ENCODE measurements at regions of chr12 and their contacts with region 1.

Region 1: GRCh38 chr12:108884116-108885012 is 4.5 kb downstream of the DAO start:
- DNase-seq: peak; percentile 31 to 70 (median 58)
- ATAC-seq: peak in 3 of 4 donors; percentile 29 to 76 (median 63)
- H3K4me3 ChIP-seq: no peak overlapping the region
- H3K27ac ChIP-seq: no peak overlapping the region
- H3K4me1 ChIP-seq: peaks cover 0 to 13% (median 0%) of the 10 kb centered on the region in 12 donors
- H3K27me3 ChIP-seq: no peaks in the 10 kb centered on the region
- CTCF ChIP-seq: peak; percentile 28 to 64 (median 50)
- POLR2A ChIP-seq: no peak

Region 2: DNA sequence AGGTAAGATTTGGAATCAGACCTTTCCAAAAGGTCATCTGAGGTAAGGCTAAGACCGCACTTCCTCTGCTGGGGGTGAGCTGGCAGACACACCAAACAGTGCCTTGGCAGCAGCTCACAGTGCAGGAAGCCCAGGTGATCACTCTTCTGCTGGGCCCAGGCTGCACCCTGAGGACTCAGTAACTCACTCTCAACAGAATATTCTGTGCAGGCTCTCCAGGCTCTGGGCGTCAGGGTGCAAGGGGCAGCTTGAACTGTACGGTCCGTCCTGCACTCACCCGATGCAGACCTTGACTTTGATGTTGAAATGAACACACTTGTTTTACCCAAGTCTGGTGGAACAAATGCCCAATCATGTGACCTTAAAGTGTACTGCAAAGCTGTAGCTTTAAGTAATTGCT is 202.9 kb after region 1 on chr12:
- intact Hi-C with region 1: loop called in 3 of 10 experiments (anchors 10 kb)
- DNase-seq: no peak
- ATAC-seq: peak in 3 of 4 donors; percentile 47 to 54 (median 48)
- H3K4me3 ChIP-seq: no peak overlapping the region
- H3K27ac ChIP-seq: no peak overlapping the region
- H3K4me1 ChIP-seq: peaks cover 0 to 12% (median 6%) of the 10 kb centered on the region in 12 donors
- H3K27me3 ChIP-seq: no peaks in the 10 kb centered on the region
- CTCF ChIP-seq: no peak
- POLR2A ChIP-seq: no peak

Region 3: DNA sequence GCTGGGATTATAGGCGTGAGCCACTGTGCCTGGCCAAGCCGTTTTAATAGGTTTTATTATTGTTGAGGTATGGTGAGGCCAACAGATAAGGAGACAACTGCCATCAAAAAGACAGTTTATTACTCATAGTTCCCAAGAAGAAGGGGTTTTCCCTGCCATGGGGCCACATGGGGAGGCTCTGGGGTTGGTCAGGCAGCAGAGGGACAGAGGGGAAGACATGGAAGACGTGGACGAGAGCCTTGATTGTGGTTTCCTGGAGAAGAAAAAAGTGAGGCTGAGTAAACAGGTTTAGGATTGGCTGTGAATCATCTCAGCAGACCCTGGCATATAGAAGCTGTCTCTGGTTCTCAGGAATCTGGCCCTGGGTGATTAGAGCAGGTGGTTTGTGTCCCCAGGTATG is 354.8 kb after region 1 on chr12:
- intact Hi-C with region 1: no loop called
- DNase-seq: no peak
- ATAC-seq: no peak
- H3K4me3 ChIP-seq: no peak overlapping the region
- H3K27ac ChIP-seq: no peak overlapping the region
- H3K4me1 ChIP-seq: no peaks in the 10 kb centered on the region
- H3K27me3 ChIP-seq: no peaks in the 10 kb centered on the region
- CTCF ChIP-seq: no peak
- POLR2A ChIP-seq: no peak

Region 4: GRCh38 chr12:110088936-110089335 is 1204.6 kb after region 1 on chr12:
- intact Hi-C with region 1: no loop called
- DNase-seq: no peak
- ATAC-seq: peak in 3 of 4 donors; percentile 39 to 52 (median 49)
- H3K4me3 ChIP-seq: no peak overlapping the region
- H3K27ac ChIP-seq: peak overlapping the region in 1 of 12 donors; percentile 79
- H3K4me1 ChIP-seq: peaks cover 0 to 19% (median 0%) of the 10 kb centered on the region in 12 donors
- H3K27me3 ChIP-seq: peaks cover 0 to 8% (median 0%) of the 10 kb centered on the region in 9 donors
- CTCF ChIP-seq: no peak
- POLR2A ChIP-seq: no peak